BJ (cell line): ENCODE measurements at regions of chr2 and their contacts with region 1.

Region 1: DNA sequence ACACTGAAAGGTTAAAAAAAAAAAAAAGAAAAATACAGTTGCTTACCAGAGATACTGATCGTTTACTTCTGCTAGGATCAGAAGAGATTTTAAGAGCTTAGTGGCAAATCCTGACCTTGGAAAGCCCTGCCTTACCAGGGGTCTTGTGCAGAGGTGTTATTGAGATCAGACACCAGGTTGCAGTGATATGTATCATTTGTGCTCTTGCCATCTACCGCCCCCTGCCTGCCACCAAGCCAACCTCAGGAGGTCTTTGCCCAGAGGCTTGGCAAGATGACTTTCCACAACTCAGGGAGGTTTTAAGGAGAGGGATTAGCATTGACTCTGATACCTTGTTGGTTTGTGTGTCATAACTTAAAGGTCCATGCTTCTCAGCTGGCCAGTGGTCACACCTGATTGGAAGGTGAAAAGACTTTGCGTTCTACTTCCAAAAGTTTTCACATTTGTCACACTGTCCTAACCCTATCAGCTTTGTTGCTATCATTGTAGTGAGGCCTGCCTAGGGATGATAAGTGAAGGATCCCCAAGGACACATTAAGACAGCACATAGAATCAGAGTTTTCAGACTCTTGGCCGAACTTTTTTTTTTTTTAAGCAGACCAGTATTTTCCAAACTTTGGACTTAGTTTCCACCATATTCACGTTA is 46.2 kb upstream of the MGAT5 start:
- DNase-seq: no peak
- H3K4me3 ChIP-seq: no peak overlapping the region
- H3K27me3 ChIP-seq: no peaks in the 10 kb centered on the region
- CTCF ChIP-seq: peak; percentile 67

Region 2: DNA sequence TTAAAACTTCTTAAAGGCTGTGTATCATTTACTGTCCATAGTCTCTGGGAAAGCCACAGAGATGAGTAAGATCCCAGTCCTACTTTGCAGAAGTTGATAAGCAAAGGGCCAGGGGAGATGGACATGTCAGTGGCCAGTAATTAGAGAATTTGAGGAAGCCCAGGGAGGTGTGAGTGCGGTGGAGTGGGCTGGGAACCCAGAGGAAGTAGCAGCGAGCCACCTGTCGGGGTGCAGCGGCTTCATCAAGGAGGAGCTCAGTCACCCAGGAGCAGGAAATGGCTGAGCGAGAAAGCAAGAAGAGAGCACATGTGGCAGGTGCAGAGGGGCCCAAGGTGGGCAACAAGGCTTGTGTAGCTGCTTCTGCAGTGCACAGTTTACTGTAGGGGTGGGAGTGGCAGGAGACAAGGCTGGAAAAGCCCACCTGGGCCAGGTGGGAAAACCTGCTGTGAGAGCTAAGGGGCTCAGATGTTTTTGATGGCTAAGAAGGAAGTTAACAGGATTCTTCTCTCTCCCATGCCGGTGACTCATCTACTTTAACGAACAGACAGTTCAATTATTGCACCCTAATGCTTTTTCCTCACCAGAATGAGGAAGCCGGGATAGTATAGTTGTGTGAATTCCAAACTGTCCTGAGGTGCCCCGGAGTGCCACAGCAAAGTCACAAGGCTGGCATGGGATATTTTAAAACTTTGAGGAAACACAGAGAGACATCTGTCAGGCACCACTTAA is 11.4 kb after region 1 on chr2:
- CTCF ChIA-PET with region 1: interaction called, 30 read pairs
- POLR2A ChIA-PET with region 1: no interaction called
- DNase-seq: no peak
- H3K4me3 ChIP-seq: no peak overlapping the region
- H3K27me3 ChIP-seq: no peaks in the 10 kb centered on the region
- CTCF ChIP-seq: no peak

Region 3: GRCh38 chr2:134372611-134373131 is 165.0 kb after region 1 on chr2:
- CTCF ChIA-PET with region 1: no interaction called
- POLR2A ChIA-PET with region 1: no interaction called
- DNase-seq: peak; percentile 83
- H3K4me3 ChIP-seq: no peak overlapping the region
- H3K27me3 ChIP-seq: no peaks in the 10 kb centered on the region
- CTCF ChIP-seq: no peak